ENCODE measurements at regions of chr7 and their contacts with region 1.

Region 1: DNA sequence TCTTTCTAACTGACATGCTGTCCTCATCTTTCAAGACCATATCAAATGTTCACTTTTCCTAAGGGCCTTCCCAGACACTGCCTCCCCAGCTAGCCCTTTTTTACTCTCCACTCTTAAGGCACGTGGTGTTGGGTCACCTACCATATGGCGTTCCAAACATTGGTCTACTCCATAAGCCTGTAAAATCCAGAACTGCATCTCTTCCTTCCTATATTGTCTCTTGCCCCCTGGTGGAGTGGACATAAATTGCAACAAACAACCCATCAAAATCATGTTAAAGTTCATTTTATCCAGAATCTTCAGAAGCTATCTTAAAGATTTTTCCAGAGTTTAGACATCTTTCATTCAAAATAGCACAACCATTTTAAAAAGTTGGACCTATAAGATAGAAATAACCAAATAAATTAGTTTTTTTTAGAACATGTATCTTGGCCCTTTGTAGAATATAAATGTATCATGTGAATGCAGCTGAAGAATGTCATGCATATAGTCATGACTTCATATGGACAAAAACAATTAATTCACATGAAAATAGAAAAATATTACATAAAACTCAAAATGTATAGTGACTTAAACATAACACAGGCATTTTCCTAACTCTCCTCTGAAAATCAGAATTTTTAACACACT is 180.6 kb upstream of the CHRM2 start:
- DNase-seq: peak; percentile 33
- H3K4me3 ChIP-seq: no peak overlapping the region; a peak in 1 of 4 replicates
- H3K27ac ChIP-seq: no peak overlapping the region
- H3K4me1 ChIP-seq: peaks cover 0 to 20% of the 10 kb centered on the region in 2 experiments; a peak in 2 of 4 replicates
- H3K27me3 ChIP-seq: no peaks in the 10 kb centered on the region
- CTCF ChIP-seq: peak; percentile 59
- EP300 ChIP-seq: no peak
- RAD21 ChIP-seq: peak; percentile 65

Region 2: GRCh38 chr7:136399385-136399784 is 288.4 kb before region 1 on chr7:
- CTCF ChIA-PET with region 1: no interaction called
- POLR2A ChIA-PET with region 1: no interaction called
- DNase-seq: no peak
- H3K4me3 ChIP-seq: no peak overlapping the region
- H3K27ac ChIP-seq: no peak overlapping the region
- H3K4me1 ChIP-seq: no peaks in the 10 kb centered on the region
- H3K27me3 ChIP-seq: no peaks in the 10 kb centered on the region
- CTCF ChIP-seq: no peak
- EP300 ChIP-seq: no peak
- RAD21 ChIP-seq: no peak

Region 3: GRCh38 chr7:136677471-136678365 is 10.1 kb before region 1 on chr7:
- CTCF ChIA-PET with region 1: interaction called, 24 read pairs
- POLR2A ChIA-PET with region 1: no interaction called
- DNase-seq: no peak
- H3K4me3 ChIP-seq: no peak overlapping the region
- H3K27ac ChIP-seq: peak overlapping the region in 1 of 2 experiments; percentile 72; a peak in 2 of 4 replicates
- H3K4me1 ChIP-seq: peaks cover 0 to 12% of the 10 kb centered on the region in 2 experiments; a peak in 1 of 4 replicates
- H3K27me3 ChIP-seq: no peaks in the 10 kb centered on the region
- CTCF ChIP-seq: no peak
- EP300 ChIP-seq: peak in 1 of 2 experiments; percentile 37; a peak in 1 of 4 replicates
- RAD21 ChIP-seq: no peak

Region 4: GRCh38 chr7:136847858-136848257 is 160.1 kb after region 1 on chr7:
- CTCF ChIA-PET with region 1: no interaction called
- POLR2A ChIA-PET with region 1: no interaction called
- DNase-seq: no peak
- H3K4me3 ChIP-seq: no peak overlapping the region
- H3K27ac ChIP-seq: no peak overlapping the region
- H3K4me1 ChIP-seq: no peaks in the 10 kb centered on the region
- H3K27me3 ChIP-seq: no peaks in the 10 kb centered on the region
- CTCF ChIP-seq: no peak
- EP300 ChIP-seq: no peak
- RAD21 ChIP-seq: no peak

Measured in SK-N-SH (cell line).